ENCODE measurements at regions of chr10 and their contacts with region 1.

Region 1: GRCh38 chr10:60444494-60445064 is 54.9 kb upstream of the ANK3 start:
- ATAC-seq: no peak
- H3K4me3 ChIP-seq: no peak overlapping the region
- H3K27ac ChIP-seq: no peak overlapping the region
- H3K4me1 ChIP-seq: peaks cover 4 to 6% of the 10 kb centered on the region in 2 donors

Region 2: DNA sequence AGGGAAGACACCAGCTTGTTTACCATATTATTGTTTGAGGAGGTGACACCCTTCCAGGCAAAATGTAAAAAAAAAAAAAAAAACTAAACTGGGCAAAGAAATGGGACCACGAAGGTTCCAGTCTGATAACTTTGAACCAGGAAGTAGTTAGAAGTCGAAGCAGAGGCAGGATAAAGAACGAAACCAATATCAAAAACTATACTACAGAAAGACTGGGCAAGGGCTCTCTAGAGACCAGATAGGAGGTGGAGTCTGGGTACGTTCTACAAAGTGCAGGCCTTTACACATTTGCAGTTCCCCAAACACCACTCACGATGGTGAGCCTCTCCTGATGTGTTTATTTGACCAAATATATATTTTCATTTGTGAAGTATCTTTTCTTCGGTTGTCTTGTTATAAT is 208.0 kb after region 1 on chr10:
- in situ Hi-C with region 1: loop called in 4 of 9 experiments (anchors 10 to 25 kb)
- ATAC-seq: no peak
- H3K4me3 ChIP-seq: no peak overlapping the region
- H3K27ac ChIP-seq: no peak overlapping the region
- H3K4me1 ChIP-seq: no peaks in the 10 kb centered on the region

Measured in motor neuron (in vitro differentiated cells).